Naive thymus-derived CD4-positive, alpha-beta T cell (primary cell): ENCODE measurements at regions of chr15 and their contacts with region 1.

Region 1: GRCh38 chr15:52772766-52773165 is 17.4 kb downstream of the ONECUT1 start:
- DNase-seq: no peak
- ATAC-seq: no peak
- H3K4me3 ChIP-seq: no peak overlapping the region
- H3K4me3 Mint-ChIP-seq: no peak overlapping the region
- H3K27ac ChIP-seq: no peak overlapping the region
- H3K27ac Mint-ChIP-seq: no peak overlapping the region
- H3K4me1 ChIP-seq: no peaks in the 10 kb centered on the region
- H3K4me1 Mint-ChIP-seq: no peaks in the 10 kb centered on the region
- H3K27me3 ChIP-seq: no peaks in the 10 kb centered on the region
- H3K27me3 Mint-ChIP-seq: peaks cover 47 to 73% (median 63%) of the 10 kb centered on the region in 5 donors

Region 2: GRCh38 chr15:51801391-51801835 is 971.4 kb before region 1 on chr15:
- CTCF ChIA-PET with region 1: no interaction called
- POLR2A ChIA-PET with region 1: no interaction called
- intact Hi-C with region 1: loop called in 1 of 2 experiments (anchors 5 kb)
- DNase-seq: no peak
- ATAC-seq: no peak
- H3K4me3 ChIP-seq: no peak overlapping the region
- H3K4me3 Mint-ChIP-seq: no peak overlapping the region
- H3K27ac ChIP-seq: no peak overlapping the region
- H3K27ac Mint-ChIP-seq: no peak overlapping the region
- H3K4me1 ChIP-seq: no peaks in the 10 kb centered on the region
- H3K4me1 Mint-ChIP-seq: peaks cover 0 to 4% (median 0%) of the 10 kb centered on the region in 7 donors
- H3K27me3 ChIP-seq: no peaks in the 10 kb centered on the region
- H3K27me3 Mint-ChIP-seq: no peaks in the 10 kb centered on the region